T-cell (primary cell): ENCODE measurements at regions of chr7 and their contacts with region 1.

Region 1: DNA sequence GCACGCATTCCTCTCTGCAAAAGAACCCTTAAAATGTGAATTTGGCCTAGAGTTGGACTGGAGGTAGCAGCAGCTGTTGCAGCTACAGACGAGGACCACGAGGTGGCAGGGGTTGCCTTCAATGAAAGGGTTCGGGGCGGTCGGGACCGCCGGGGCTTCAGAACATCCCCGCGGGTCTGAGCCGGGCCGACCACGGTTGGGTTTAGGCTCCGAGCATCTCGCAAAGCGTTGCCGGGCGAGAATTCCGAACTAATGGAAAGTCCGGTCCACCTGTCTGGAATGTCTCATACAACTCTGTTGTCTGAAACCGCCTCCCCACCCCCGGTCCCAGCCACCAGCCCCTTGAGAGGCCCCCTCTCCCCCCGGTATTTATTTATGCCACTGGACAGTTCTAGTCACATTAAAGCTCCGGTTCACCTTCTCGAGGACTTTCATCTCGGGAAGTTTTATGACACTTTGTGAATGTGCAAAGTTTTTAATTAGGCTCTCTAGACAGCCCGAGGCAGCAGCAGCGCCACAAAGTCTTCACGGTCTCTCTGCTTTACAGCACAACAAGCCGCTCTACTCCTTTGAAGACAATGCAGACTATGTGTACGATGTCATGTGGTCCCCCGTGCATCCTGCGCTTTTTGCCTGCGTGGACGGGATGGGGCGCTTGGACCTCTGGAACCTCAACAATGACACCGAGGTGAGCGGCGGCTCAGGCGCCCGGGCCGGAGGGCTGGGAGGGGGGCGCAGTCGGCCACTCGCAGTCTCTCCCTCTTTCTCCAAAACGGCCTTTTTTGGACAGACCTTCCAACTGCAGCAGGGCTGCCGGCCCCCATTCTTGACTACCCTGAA is 246.2 kb downstream of the SLC25A13 start:
- DNase-seq: peak in 33 of 35 experiments; percentile 3 to 60 (median 31)
- ATAC-seq: peak; percentile 84 to 88 (median 86)
- H3K4me3 ChIP-seq: peak overlapping the region; percentile 38 to 60
- H3K4me3 Mint-ChIP-seq: peak overlapping the region; percentile 79 to 81 (median 80)
- H3K27ac ChIP-seq: no peak overlapping the region
- H3K27ac Mint-ChIP-seq: no peak overlapping the region
- H3K4me1 ChIP-seq: peaks cover 0 to 9% of the 10 kb centered on the region in 2 experiments
- H3K4me1 Mint-ChIP-seq: peaks cover 10 to 14% (median 13%) of the 10 kb centered on the region in 3 donors
- H3K27me3 ChIP-seq: peaks cover 0 to 12% of the 10 kb centered on the region in 2 experiments
- H3K27me3 Mint-ChIP-seq: peaks cover 27 to 31% of the 10 kb centered on the region in 2 donors

Region 2: GRCh38 chr7:95190515-95190914 is 885.2 kb before region 1 on chr7:
- CTCF ChIA-PET with region 1: no interaction called
- POLR2A ChIA-PET with region 1: no interaction called
- DNase-seq: no peak
- ATAC-seq: no peak
- H3K4me3 ChIP-seq: no peak overlapping the region
- H3K4me3 Mint-ChIP-seq: no peak overlapping the region
- H3K27ac ChIP-seq: no peak overlapping the region
- H3K27ac Mint-ChIP-seq: no peak overlapping the region
- H3K4me1 ChIP-seq: no peaks in the 10 kb centered on the region
- H3K4me1 Mint-ChIP-seq: no peaks in the 10 kb centered on the region
- H3K27me3 ChIP-seq: no peaks in the 10 kb centered on the region
- H3K27me3 Mint-ChIP-seq: peaks cover 0 to 11% of the 10 kb centered on the region in 2 donors

Region 3: GRCh38 chr7:95865716-95866371 is 209.9 kb before region 1 on chr7:
- CTCF ChIA-PET with region 1: no interaction called
- POLR2A ChIA-PET with region 1: no interaction called
- DNase-seq: no peak
- ATAC-seq: no peak
- H3K4me3 ChIP-seq: no peak overlapping the region
- H3K4me3 Mint-ChIP-seq: no peak overlapping the region
- H3K27ac ChIP-seq: no peak overlapping the region
- H3K27ac Mint-ChIP-seq: no peak overlapping the region
- H3K4me1 ChIP-seq: no peaks in the 10 kb centered on the region
- H3K4me1 Mint-ChIP-seq: no peaks in the 10 kb centered on the region
- H3K27me3 ChIP-seq: no peaks in the 10 kb centered on the region
- H3K27me3 Mint-ChIP-seq: peaks cover 0 to 2% of the 10 kb centered on the region in 2 donors

Region 4: GRCh38 chr7:97027427-97028234 is 951.9 kb after region 1 on chr7:
- CTCF ChIA-PET with region 1: interaction called, 10 to 13 read pairs
- POLR2A ChIA-PET with region 1: no interaction called
- DNase-seq: peak in 34 of 35 experiments; percentile 29 to 81 (median 58)
- ATAC-seq: peak; percentile 66 to 71 (median 70)
- H3K4me3 ChIP-seq: peak overlapping the region; percentile 23 to 60
- H3K4me3 Mint-ChIP-seq: peak overlapping the region; percentile 71 to 80 (median 79)
- H3K27ac ChIP-seq: no peak overlapping the region
- H3K27ac Mint-ChIP-seq: no peak overlapping the region
- H3K4me1 ChIP-seq: peaks cover 4 to 37% of the 10 kb centered on the region in 2 experiments
- H3K4me1 Mint-ChIP-seq: peaks cover 42 to 45% (median 44%) of the 10 kb centered on the region in 3 donors
- H3K27me3 ChIP-seq: peaks cover 14 to 62% of the 10 kb centered on the region in 2 experiments
- H3K27me3 Mint-ChIP-seq: peaks cover 61 to 73% of the 10 kb centered on the region in 2 donors